GM10248 (cell line): ENCODE measurements at regions of chr2 and their contacts with region 1.

Region 1: DNA sequence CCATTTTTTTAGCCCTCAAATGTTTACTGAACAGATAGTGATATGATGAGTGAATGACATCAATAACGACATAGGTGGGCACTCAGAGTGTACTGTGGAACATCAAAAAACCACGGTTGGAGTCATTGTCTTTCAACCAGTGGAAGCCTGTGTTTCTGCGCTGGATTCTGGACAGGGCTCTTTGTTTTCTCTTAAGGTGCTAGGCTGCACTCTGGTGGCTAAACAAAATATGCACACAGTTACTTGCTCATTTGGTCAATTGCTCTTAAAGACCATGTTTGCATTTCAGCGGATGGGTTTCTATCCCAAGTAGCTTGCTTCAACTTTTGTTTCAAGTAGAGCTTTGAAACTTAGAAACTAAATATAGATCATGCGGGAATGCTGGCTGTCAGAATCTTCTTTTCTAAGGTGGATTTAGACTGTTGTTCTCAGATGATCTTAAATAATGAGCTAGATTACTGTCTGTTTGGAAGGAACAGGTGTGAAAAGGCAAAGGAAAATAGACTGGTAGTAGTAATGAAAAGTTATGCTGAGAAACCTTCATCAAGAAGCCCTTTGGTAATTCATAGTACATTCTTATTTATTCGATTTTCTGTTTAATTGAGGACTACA is 48.5 kb upstream of the LYPD6B start:
- DNase-seq: peak; percentile 62
- CTCF ChIP-seq: peak; percentile 70

Region 2: GRCh38 chr2:147937744-147938349 is 1052.1 kb before region 1 on chr2:
- CTCF ChIA-PET with region 1: interaction called, 13 read pairs
- POLR2A ChIA-PET with region 1: no interaction called
- DNase-seq: peak; percentile 5
- CTCF ChIP-seq: peak; percentile 72

Region 3: GRCh38 chr2:147989809-147990403 is 1000.1 kb before region 1 on chr2:
- CTCF ChIA-PET with region 1: interaction called, 19 read pairs
- POLR2A ChIA-PET with region 1: no interaction called
- DNase-seq: peak; percentile 62
- CTCF ChIP-seq: peak; percentile 67

Region 4: GRCh38 chr2:149000158-149000938 is 10.4 kb after region 1 on chr2:
- CTCF ChIA-PET with region 1: interaction called, 10 read pairs
- POLR2A ChIA-PET with region 1: no interaction called
- DNase-seq: no peak
- CTCF ChIP-seq: no peak

Region 5: GRCh38 chr2:149006883-149007540 is 17.0 kb after region 1 on chr2:
- CTCF ChIA-PET with region 1: interaction called, 18 read pairs
- POLR2A ChIA-PET with region 1: no interaction called
- DNase-seq: no peak
- CTCF ChIP-seq: no peak